Naive thymus-derived CD4-positive, alpha-beta T cell (primary cell): ENCODE measurements at regions of chr3 and their contacts with region 1.

Region 1: GRCh38 chr3:10047876-10048275 is 21.6 kb downstream of the FANCD2 start:
- DNase-seq: no peak
- ATAC-seq: no peak
- H3K4me3 ChIP-seq: no peak overlapping the region
- H3K4me3 Mint-ChIP-seq: no peak overlapping the region
- H3K27ac ChIP-seq: no peak overlapping the region
- H3K27ac Mint-ChIP-seq: no peak overlapping the region
- H3K4me1 ChIP-seq: no peaks in the 10 kb centered on the region
- H3K4me1 Mint-ChIP-seq: no peaks in the 10 kb centered on the region
- H3K27me3 ChIP-seq: no peaks in the 10 kb centered on the region
- H3K27me3 Mint-ChIP-seq: peaks cover 0 to 2% (median 0%) of the 10 kb centered on the region in 5 donors

Region 2: GRCh38 chr3:9994086-9994844 is 53.6 kb before region 1 on chr3:
- CTCF ChIA-PET with region 1: no interaction called
- POLR2A ChIA-PET with region 1: no interaction called
- intact Hi-C with region 1: loop called in 1 of 2 experiments (anchors 1 kb)
- DNase-seq: no peak
- ATAC-seq: no peak
- H3K4me3 ChIP-seq: no peak overlapping the region
- H3K4me3 Mint-ChIP-seq: no peak overlapping the region
- H3K27ac ChIP-seq: no peak overlapping the region
- H3K27ac Mint-ChIP-seq: no peak overlapping the region
- H3K4me1 ChIP-seq: no peaks in the 10 kb centered on the region
- H3K4me1 Mint-ChIP-seq: peaks cover 0 to 3% (median 0%) of the 10 kb centered on the region in 7 donors
- H3K27me3 ChIP-seq: no peaks in the 10 kb centered on the region
- H3K27me3 Mint-ChIP-seq: no peaks in the 10 kb centered on the region